Dorsolateral prefrontal cortex (tissue), 120 donors: ENCODE measurements at regions of chr1 and their contacts with region 1.

Region 1: DNA sequence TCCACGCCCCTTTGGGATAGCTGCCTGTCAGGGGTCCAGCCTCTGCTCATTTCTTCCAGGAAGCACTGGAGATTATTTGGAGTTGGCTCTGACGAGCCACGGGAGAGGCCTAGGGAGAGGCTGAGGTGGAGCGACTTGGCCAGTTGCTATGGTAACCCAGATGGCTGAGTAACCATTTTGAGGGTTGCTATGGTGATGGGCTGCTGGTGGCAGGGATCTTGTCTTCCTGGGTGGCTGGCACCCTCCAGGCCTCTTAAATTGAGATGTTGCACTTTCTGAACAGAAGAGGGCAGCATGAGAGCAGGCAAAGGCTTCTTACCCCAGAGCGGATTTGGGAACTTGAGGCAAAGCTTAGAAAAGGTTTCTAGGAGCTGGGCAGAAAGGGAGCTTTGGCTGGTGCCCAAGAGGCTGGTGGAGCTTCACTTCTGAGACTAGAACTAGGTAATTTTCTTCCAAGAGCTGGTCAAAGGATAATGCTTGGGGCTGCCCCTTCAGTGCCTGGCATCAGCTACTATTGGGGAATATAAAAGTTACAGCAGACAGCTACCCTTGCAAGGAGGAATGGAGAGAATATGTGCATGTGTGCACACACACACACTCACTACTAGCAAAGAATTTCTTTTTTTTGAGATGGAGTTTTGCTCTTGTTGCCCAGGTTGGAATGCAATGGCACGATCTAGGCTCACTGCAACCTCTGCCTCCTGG is 72.5 kb downstream of the NDUFS5 start:
- DNase-seq: peak; percentile 38 to 85 (median 80)
- H3K4me3 ChIP-seq: peak overlapping the region in 7 of 59 donors; percentile 1 to 28 (median 5)
- H3K27ac ChIP-seq: peak overlapping the region in 46 of 59 donors; percentile 7 to 80 (median 62)
- H3K27me3 ChIP-seq: no peaks in the 10 kb centered on the region
- CTCF ChIP-seq: peak; percentile 40 to 86 (median 78)

Region 2: GRCh38 chr1:38848071-38848470 is 250.6 kb before region 1 on chr1:
- intact Hi-C with region 1: no loop called
- DNase-seq: no peak
- H3K4me3 ChIP-seq: no peak overlapping the region
- H3K27ac ChIP-seq: no peak overlapping the region
- H3K27me3 ChIP-seq: no peaks in the 10 kb centered on the region
- CTCF ChIP-seq: no peak

Region 3: GRCh38 chr1:39026051-39026865 is 72.4 kb before region 1 on chr1 and contains the start of gene NDUFS5:
- intact Hi-C with region 1: loop called in 1 of 2 experiments (anchors 5 kb)
- DNase-seq: peak; percentile 72 to 95 (median 91)
- H3K4me3 ChIP-seq: peak within 1 kb of the TSS; percentile 47 to 97 (median 82)
- H3K27ac ChIP-seq: peak within 1 kb of the TSS; percentile 69 to 98 (median 92)
- H3K27me3 ChIP-seq: no peaks in the 10 kb centered on the region
- CTCF ChIP-seq: peak in 12 of 56 donors; percentile 2 to 23 (median 10)
- total RNA-seq, gene NDUFS5: 129 to 361 (median 263) TPM

Region 4: GRCh38 chr1:39159224-39160036 is 60.7 kb after region 1 on chr1:
- intact Hi-C with region 1: no loop called
- DNase-seq: no peak
- H3K4me3 ChIP-seq: peak overlapping the region in 8 of 59 donors; percentile 21 to 52 (median 40)
- H3K27ac ChIP-seq: peak overlapping the region in 38 of 59 donors; percentile 1 to 67 (median 44)
- H3K27me3 ChIP-seq: no peaks in the 10 kb centered on the region
- CTCF ChIP-seq: no peak

Region 5: DNA sequence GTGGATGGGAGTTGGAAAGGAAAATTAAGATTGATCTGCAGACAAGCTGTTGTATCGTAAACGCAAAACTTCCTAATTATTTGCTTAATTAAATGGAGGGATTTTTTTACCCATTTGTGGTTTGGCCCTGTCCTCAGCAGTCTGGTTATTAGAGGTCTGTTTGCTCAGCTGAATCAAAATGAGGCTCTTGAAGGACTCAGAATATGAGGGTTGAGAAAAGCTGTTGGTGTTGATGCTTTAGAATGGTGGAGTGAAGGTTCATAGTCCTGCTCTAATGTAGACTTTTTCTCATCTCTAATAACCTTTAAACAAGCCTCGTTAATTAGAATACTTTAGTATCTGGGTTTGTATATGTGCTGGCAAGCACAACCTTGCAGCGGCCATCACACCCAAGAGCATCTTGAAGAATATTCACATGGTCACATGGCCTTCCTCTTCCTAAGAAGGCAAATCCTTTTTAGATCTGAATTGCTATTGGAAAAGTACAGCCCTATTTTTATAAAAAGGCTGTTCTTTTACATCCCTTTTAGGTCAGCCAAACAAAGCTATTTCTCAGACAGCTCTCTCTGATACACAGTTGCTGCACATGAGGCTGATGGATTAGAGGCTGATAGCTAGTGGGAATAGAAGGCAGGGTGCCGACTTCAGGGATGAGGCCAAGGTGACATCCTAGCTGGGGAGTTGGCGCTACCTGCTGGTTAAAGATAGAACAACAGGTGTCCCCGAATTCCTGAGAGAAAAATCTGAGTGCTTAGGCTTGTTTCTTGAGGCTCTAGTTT is 159.6 kb after region 1 on chr1:
- intact Hi-C with region 1: loop called (anchors 2 to 5 kb)
- DNase-seq: peak in 8 of 10 donors; percentile 57 to 77 (median 64)
- H3K4me3 ChIP-seq: peak overlapping the region in 1 of 59 donors; percentile 5
- H3K27ac ChIP-seq: peak overlapping the region; percentile 6 to 87 (median 72)
- H3K27me3 ChIP-seq: no peaks in the 10 kb centered on the region
- CTCF ChIP-seq: peak; percentile 56 to 94 (median 85)

Region 6: GRCh38 chr1:39354572-39354971 is 255.9 kb after region 1 on chr1:
- intact Hi-C with region 1: loop called (anchors 5 to 10 kb)
- DNase-seq: no peak
- H3K4me3 ChIP-seq: no peak overlapping the region
- H3K27ac ChIP-seq: peak overlapping the region in 13 of 59 donors; percentile 0 to 63 (median 23)
- H3K27me3 ChIP-seq: no peaks in the 10 kb centered on the region
- CTCF ChIP-seq: peak in 48 of 56 donors; percentile 16 to 69 (median 40)

Region 7: DNA sequence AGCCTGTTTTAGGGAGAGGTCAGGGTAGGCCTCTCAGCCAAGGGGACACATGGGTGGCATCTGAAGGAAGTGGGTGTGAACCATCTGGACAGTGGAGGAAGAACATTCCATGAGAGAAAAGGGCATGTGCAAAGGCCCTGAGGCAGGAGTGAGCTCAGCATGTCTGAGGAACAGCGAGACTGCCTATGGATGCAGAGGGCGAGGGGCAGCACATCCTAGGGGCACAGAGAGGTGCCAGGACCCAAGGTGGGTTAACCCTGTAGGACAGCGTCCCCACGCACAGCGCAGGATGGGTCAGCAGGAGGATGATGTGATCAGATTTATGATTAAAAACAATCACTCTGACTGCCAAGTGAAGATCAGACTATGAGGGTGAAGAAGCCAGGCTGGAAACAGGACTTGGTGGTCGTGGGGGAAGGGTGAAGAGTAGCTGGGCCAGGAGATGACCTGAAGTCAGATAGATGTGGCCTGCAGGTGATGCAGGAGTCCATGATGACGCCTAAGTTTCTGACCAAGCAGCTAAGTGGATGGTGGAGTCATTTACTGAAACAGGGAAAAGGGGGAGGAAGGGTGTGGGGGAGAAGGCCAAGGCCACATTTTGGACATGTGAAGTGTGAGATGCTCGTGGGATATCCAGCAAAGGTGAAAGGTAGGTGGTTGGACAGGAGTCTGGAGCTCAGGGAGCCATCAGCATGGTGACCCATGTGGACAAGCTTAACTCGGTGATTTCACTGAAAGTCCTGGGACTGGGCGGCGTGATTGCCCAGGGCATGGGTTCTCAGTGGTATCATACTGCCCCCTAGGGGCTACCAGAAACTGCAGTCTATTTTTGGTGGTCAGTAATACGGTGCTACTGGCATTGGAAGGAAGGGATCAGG is 440.1 kb after region 1 on chr1:
- intact Hi-C with region 1: loop called (anchors 5 to 10 kb)
- DNase-seq: peak; percentile 55 to 82 (median 76)
- H3K4me3 ChIP-seq: no peak overlapping the region
- H3K27ac ChIP-seq: peak overlapping the region in 25 of 59 donors; percentile 1 to 94 (median 87)
- H3K27me3 ChIP-seq: no peaks in the 10 kb centered on the region
- CTCF ChIP-seq: peak; percentile 83 to 99 (median 94)